Heart left ventricle (tissue), 16 donors: ENCODE measurements at regions of chr10 and their contacts with region 1.

Region 1: DNA sequence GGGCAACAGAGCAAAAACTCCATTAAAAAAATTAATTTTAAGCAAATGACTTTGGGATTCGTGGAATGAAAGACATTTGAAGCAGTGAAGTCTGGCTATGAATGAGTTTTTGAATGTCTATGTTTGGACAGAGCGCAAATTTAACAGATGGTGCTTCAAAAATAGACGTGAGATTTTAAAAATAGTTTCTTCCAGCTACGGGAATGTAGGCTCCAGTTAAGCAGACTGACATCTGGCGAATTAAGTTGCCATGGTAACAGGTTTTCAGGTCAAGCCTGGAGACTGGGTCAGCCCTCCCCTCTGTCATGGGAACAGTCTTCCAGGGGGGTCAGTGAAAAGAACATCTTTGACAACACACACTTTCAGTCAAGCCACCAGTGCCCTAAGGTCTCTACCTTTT is 62.0 kb downstream of the MYOF start:
- DNase-seq: peak in 3 of 5 donors; percentile 55 to 76 (median 62)
- ATAC-seq: peak; percentile 43 to 73 (median 62)
- H3K4me3 ChIP-seq: no peak overlapping the region
- H3K27ac ChIP-seq: peak overlapping the region in 11 of 12 donors; percentile 45 to 83 (median 68)
- H3K4me1 ChIP-seq: peaks cover 0 to 66% (median 41%) of the 10 kb centered on the region in 12 donors
- H3K27me3 ChIP-seq: no peaks in the 10 kb centered on the region
- CTCF ChIP-seq: no peak
- POLR2A ChIP-seq: no peak

Region 2: GRCh38 chr10:93376372-93377293 is 43.5 kb before region 1 on chr10:
- intact Hi-C with region 1: loop called in 3 of 10 experiments (anchors 5 kb)
- DNase-seq: peak in 4 of 5 donors; percentile 37 to 64 (median 45)
- ATAC-seq: peak; percentile 78 to 93 (median 88)
- H3K4me3 ChIP-seq: peak overlapping the region in 3 of 12 donors; percentile 3 to 24 (median 10)
- H3K27ac ChIP-seq: peak overlapping the region in 10 of 12 donors; percentile 43 to 83 (median 72)
- H3K4me1 ChIP-seq: peaks cover 0 to 36% (median 11%) of the 10 kb centered on the region in 12 donors
- H3K27me3 ChIP-seq: no peaks in the 10 kb centered on the region
- CTCF ChIP-seq: peak; percentile 86 to 97 (median 94)
- POLR2A ChIP-seq: no peak

Region 3: DNA sequence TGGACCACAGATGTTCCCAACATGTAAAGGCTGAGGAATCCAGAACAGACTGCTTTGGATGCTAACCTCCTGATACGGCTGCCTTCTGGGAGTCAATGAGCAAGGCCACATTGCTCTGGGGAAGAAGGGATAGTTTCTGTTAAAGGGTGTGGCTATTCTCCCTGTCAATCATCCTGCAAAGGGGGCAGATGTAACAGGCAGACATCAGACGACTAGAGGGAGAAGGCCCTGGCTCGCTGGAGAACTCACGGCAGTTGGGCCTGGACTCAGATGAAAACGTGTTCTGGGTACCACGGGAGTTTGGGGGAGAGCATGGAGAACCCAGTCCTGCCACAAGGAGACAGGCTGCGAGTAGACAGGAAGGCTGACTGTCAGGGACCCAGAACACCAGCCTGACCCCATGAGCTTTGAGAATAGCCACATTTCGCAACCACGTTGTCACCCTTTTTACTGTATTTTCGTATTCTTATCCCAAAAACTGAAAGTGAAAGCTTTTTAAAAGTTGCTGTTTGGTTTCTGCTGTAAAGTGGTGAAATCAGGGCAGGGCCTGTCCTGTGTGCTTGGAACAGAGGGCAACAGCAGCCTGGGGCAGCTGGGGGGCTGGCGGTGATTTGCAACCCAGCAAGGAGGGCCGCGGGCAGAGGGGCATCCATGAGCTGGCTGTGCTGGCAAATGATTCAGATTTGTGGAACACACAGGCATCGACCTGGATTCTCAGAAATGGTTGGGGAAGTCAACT is 33.3 kb before region 1 on chr10:
- intact Hi-C with region 1: loop called in 2 of 10 experiments (anchors 5 kb)
- DNase-seq: peak in 3 of 5 donors; percentile 18 to 34 (median 21)
- ATAC-seq: peak in 3 of 4 donors; percentile 34 to 44 (median 44)
- H3K4me3 ChIP-seq: peak overlapping the region in 4 of 12 donors; percentile 4 to 22 (median 12)
- H3K27ac ChIP-seq: peak overlapping the region; percentile 18 to 86 (median 62)
- H3K4me1 ChIP-seq: peaks cover 0 to 68% (median 11%) of the 10 kb centered on the region in 12 donors
- H3K27me3 ChIP-seq: no peaks in the 10 kb centered on the region
- CTCF ChIP-seq: peak in 1 of 12 donors; percentile 17
- POLR2A ChIP-seq: no peak

Region 4: GRCh38 chr10:93471110-93471651 is 51.1 kb after region 1 on chr10:
- intact Hi-C with region 1: loop called in 2 of 10 experiments (anchors 5 to 10 kb)
- DNase-seq: no peak
- ATAC-seq: peak in 2 of 4 donors; percentile 19 to 64
- H3K4me3 ChIP-seq: no peak overlapping the region
- H3K27ac ChIP-seq: peak overlapping the region in 7 of 12 donors; percentile 12 to 83 (median 32)
- H3K4me1 ChIP-seq: peaks cover 0 to 66% (median 25%) of the 10 kb centered on the region in 12 donors
- H3K27me3 ChIP-seq: no peaks in the 10 kb centered on the region
- CTCF ChIP-seq: no peak
- POLR2A ChIP-seq: no peak